ENCODE measurements at regions of chr2 and their contacts with region 1.

Region 1: DNA sequence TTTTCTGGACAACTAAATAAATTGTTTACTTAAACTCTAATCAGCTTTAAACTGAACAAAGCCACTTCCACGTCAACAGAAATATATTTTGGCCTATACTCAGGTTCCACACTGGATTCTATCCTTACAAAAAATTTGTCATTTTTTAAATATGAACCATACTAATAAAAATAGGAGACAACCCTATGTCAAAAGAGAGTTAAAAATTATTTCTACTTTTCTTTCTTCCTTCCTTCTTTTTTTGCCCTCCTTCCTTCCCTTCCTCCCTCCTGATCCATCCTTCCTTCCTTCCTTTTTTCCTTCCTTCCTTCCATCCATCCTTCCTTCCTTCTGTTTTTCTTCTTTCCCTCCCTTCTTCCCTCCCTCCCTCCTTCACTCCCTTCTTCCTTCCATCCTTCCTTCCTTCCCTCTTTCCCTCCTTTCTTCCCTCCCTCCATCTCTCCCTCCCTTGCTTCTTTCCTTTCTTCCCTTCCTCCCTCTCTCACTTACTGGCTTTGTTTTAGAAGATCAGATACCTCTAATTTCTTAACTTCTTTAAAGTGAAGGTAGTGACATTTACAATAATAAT is 1444.9 kb downstream of the DPP10 start:
- DNase-seq: no peak

Region 2: DNA sequence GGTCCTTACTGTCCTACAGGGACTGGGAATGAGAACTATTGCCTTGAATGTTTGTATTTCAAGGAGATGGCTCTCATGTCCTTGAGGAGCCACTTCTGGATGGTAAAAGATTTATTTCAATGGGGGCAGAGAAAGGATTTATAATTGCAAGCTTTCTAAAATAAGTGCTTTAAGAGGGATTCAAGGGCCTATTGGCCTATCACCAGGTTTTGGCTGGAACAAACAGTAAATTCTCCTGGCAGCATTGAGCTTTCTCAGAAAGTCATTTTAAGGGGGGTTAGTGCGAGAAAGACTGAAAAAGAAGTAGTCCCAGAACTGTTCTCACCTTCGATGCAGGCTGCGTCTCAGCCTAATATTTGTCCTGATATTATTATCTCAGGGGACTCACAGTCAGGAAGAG is 1415.0 kb before region 1 on chr2:
- intact Hi-C with region 1: no loop called
- DNase-seq: no peak

Region 3: DNA sequence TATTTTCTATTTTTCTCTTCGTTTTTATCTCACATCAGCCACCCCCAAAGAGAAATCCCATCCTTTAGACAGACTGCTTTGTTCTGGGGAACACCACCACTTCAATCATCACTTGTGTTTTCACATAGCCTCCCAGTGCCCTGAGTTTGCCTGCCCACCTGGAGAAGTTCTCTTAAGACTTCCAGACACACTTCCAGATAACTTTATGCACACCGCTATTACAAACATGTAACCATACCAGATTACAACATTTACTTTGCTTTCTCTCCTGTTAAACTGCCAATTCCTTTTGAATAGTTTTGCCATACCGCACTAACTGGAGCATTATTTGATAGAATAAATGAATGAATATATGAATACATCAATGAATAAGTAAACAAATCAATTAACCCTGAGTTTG is 91.2 kb before region 1 on chr2:
- intact Hi-C with region 1: no loop called
- DNase-seq: no peak

Region 4: DNA sequence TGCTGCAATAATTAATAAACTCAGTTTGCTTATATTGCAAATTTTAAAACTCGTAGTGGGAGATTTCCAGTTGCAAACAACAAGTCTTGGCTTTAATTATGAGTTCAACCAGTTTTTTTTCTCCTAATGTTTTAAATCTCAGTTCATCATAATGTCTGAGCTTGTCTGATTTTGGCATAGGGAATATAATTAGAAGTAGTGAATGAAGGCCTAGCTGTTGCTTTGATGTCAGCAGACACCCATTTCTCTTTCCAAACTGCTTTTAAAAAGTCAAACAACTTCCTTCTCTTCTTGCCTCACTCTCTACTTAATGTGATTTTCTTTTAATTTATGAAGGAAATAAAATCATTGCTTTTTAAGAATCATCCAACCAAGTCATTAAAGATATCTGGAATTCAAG is 17.2 kb after region 1 on chr2:
- intact Hi-C with region 1: loop called in 1 of 2 experiments (anchors 1 kb)
- DNase-seq: no peak